Heart left ventricle (tissue), 16 donors: ENCODE measurements at regions of chr18 and their contacts with region 1.

Region 1: DNA sequence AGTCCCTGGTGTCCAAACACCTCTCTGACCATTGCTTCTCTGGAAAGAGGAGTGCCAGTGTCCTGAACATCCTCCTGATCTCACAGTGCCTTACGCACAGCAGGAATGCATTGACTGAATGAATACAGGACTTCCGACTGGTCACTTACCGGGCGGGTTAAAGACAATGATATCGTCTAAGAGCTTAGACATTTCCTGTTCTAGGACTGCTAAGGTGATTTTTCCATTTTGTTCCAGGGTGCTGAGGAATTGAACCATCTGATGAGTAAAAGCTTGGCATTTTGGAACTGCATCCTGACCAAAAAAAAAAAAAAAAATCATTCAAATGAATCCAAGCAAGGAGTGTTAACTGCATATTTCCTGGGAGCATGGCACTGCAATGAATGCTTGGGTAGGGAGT is 40.0 kb downstream of the SIGLEC15 start:
- DNase-seq: no peak
- ATAC-seq: no peak
- H3K4me3 ChIP-seq: no peak overlapping the region
- H3K27ac ChIP-seq: no peak overlapping the region
- H3K4me1 ChIP-seq: no peaks in the 10 kb centered on the region
- H3K27me3 ChIP-seq: no peaks in the 10 kb centered on the region
- CTCF ChIP-seq: no peak
- POLR2A ChIP-seq: no peak

Region 2: DNA sequence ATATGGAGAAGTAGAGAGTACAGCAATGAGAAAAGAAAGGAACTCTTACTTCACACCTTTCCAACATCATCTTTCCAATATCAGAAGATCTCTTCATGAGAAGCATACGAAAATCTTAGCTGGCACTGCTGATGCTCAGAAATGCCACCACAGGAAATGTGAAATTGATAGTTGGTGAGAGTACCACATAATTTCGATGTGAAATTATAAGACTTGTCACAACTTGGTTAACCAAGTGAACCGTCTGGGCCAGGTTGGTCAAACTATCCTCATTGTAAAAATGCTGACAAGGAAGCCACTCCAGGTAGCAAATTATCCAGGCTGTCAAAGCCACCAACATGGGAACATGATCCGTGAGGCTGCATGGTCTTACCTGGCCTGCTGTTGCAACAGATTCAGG is 35.2 kb after region 1 on chr18:
- intact Hi-C with region 1: loop called in 1 of 10 experiments (anchors 5 kb)
- DNase-seq: no peak
- ATAC-seq: no peak
- H3K4me3 ChIP-seq: no peak overlapping the region
- H3K27ac ChIP-seq: no peak overlapping the region
- H3K4me1 ChIP-seq: no peaks in the 10 kb centered on the region
- H3K27me3 ChIP-seq: no peaks in the 10 kb centered on the region
- CTCF ChIP-seq: no peak
- POLR2A ChIP-seq: no peak